ENCODE measurements at regions of chr4 and their contacts with region 1.

Region 1: DNA sequence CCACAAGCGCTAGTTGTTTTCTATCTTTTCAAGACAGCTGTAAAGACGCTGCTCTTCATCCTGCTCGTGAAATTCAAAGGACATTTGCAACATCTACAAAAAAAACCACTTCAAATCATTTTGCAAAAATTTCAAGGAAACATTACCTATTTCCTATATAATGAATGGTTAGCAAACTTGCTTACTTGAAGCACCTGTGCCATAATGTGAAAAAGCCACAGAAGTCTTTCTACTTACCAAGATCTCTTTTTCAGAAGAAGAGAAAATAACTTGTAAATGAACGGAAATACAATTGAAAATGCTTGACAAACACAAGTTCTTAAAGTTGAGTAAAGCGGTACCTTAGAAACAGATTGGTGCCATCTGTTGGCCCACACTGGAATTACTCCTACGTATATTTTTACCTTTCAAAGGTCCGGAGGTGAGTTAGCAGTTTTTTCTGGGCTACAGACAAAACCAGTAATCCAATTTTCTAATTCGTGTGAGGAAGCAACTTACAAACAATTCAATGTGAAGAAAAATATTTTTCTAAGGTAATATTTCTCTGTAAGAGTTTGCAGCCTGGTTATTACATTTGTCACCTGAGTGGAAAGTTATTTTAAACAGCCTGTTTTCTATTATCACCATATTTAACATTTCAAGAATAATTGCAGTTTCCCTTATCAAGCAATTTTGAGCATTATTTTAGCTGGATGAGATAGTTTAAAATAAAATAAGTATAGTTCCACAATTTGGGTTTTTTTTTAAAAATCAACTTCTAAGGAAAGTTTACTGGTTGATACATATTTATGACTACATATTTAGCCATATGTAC is at the start of gene TLR6:
- DNase-seq: peak; percentile 88
- H3K4me3 ChIP-seq: peak within 1 kb of the TSS; percentile 71
- H3K27ac ChIP-seq: peak within 1 kb of the TSS; percentile 77
- H3K4me1 ChIP-seq: peaks cover 51% of the 10 kb centered on the region
- CTCF ChIP-seq: peak; percentile 96
- total RNA-seq, gene TLR6: 1.5 TPM in 2 replicates

Region 2: DNA sequence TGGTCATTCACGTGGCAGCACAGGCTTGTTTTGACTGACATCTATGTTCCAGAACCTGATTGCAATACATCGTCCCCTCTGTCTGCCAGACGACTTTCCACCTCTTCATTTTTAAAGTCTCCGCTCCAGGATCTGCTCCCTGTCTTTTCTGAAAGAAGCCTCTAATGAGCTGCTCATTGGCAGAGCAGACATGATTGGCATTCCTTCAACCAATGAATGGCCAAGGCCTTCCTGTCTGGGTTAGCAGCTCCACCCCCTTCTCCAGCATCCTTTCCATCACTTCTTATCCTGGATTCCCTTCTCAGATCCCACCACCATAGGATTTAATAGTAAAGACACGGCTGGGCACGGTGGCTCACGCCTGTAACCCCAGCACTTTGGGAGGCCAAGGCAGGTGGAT is 395.4 kb before region 1 on chr4:
- CTCF ChIA-PET with region 1: no interaction called
- POLR2A ChIA-PET with region 1: no interaction called
- intact Hi-C with region 1: no loop called
- DNase-seq: no peak
- H3K4me3 ChIP-seq: no peak overlapping the region
- H3K27ac ChIP-seq: no peak overlapping the region
- H3K4me1 ChIP-seq: no peaks in the 10 kb centered on the region
- CTCF ChIP-seq: no peak

Region 3: GRCh38 chr4:38804654-38805295 is 52.0 kb before region 1 on chr4 and contains the start of gene TLR1:
- CTCF ChIA-PET with region 1: interaction called, 3 read pairs
- POLR2A ChIA-PET with region 1: interaction called, 5 read pairs
- intact Hi-C with region 1: loop called (anchors 1 kb)
- DNase-seq: peak; percentile 72
- H3K4me3 ChIP-seq: peak within 1 kb of the TSS; percentile 62
- H3K27ac ChIP-seq: peak within 1 kb of the TSS; percentile 96
- H3K4me1 ChIP-seq: peaks cover 26% of the 10 kb centered on the region
- CTCF ChIP-seq: peak; percentile 85
- total RNA-seq, gene TLR1: 3.3 and 3.8 TPM in 2 replicates

Region 4: DNA sequence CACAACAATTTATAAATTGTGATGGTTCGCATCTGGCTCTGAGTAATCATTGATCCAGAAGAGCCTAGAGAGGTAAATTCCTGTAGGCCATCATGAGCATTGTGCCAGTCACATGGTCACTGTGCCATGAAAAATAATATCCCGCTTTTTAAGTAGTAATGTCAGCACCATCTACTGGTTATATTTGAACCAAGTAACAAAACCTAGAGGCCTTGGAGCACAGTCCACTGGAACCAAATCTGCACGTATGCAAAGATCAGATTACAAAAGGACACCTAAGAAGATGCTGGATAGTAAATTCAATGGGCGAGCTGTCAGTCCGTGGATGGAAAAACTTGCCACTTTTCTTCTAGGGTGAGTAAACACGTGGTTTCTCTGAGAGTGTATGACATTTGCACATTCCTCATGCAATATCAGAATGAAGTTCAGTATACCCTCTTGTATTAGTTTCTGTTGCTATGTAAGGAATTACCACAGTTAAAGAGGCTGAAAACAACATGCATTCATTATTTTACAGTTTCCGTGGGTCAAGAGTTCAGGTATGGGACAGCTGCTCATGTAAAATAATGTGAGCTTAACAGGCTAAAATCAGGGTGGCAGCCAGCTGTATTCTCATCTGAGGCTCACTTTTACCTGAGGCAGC is 37.7 kb after region 1 on chr4:
- CTCF ChIA-PET with region 1: no interaction called
- POLR2A ChIA-PET with region 1: no interaction called
- intact Hi-C with region 1: no loop called
- DNase-seq: peak; percentile 10
- H3K4me3 ChIP-seq: no peak overlapping the region
- H3K27ac ChIP-seq: no peak overlapping the region
- H3K4me1 ChIP-seq: no peaks in the 10 kb centered on the region
- CTCF ChIP-seq: peak; percentile 55

Measured in OCI-LY7 (cell line).